Mammary epithelial cell (primary cell): ENCODE measurements at regions of chr22 and their contacts with region 1.

Region 1: GRCh38 chr22:30459181-30460052 is 12.4 kb downstream of the SEC14L3 start:
- DNase-seq: peak; percentile 31
- H3K4me3 ChIP-seq: no peak overlapping the region
- H3K27ac ChIP-seq: no peak overlapping the region
- H3K4me1 ChIP-seq: no peaks in the 10 kb centered on the region
- H3K27me3 ChIP-seq: no peaks in the 10 kb centered on the region
- CTCF ChIP-seq: no peak

Region 2: DNA sequence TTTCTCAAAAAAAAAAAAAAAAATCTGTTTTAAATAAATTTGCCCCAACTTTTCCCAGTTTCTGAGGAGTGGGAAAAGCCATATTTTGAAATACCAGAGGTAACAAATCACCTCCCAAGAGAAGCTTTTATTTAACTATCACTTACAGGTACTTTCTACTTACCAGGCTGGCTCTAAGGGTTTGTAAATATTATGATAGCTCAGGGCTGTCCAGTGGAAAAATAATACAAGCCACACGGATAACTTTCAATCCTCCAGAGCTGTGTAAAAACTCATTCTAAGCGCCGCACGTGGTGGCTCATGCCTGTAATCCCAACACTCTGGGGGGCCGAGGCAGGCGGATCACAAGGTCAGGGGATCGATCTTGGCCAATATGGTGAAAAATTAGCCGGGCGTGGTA is 51.7 kb after region 1 on chr22:
- CTCF ChIA-PET with region 1: no interaction called
- dilution Hi-C with region 1: loop called (anchors 5 kb)
- in situ Hi-C with region 1: no loop called
- intact Hi-C with region 1: no loop called
- DNase-seq: no peak
- H3K4me3 ChIP-seq: no peak overlapping the region
- H3K27ac ChIP-seq: no peak overlapping the region
- H3K4me1 ChIP-seq: no peaks in the 10 kb centered on the region
- H3K27me3 ChIP-seq: no peaks in the 10 kb centered on the region
- CTCF ChIP-seq: no peak